ENCODE measurements at regions of chr1 and their contacts with region 1.

Region 1: DNA sequence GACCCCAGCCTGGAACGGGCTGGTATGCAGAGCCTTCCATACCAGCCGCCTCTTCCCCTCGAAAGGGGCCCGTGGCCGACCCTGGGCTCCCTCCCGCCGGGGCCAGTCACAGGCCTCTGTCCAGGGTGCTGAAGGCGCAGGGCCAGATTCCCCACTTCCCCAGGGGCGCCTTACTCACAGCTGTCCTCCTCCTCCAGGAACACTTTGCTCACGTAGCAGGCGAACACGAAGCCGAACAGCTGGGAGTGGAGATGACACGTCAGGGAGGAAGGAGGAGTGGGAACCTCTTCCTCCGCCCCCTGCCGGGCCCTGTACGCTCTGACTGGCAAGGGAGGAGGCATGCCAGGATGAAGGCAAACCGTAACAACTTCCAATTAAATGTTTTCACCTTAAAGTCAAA is 57.3 kb downstream of the NKAIN1 start:
- DNase-seq: peak; percentile 94
- ATAC-seq: peak; percentile 85
- H3K4me3 ChIP-seq: no peak overlapping the region
- H3K27ac ChIP-seq: no peak overlapping the region
- H3K4me1 ChIP-seq: peaks cover 4% of the 10 kb centered on the region
- H3K27me3 ChIP-seq: no peaks in the 10 kb centered on the region
- CTCF ChIP-seq: peak; percentile 46

Region 2: GRCh38 chr1:30877205-30877912 is 305.0 kb before region 1 on chr1:
- CTCF ChIA-PET with region 1: no interaction called
- POLR2A ChIA-PET with region 1: no interaction called
- intact Hi-C with region 1: no loop called
- DNase-seq: no peak
- ATAC-seq: no peak
- H3K4me3 ChIP-seq: no peak overlapping the region
- H3K27ac ChIP-seq: no peak overlapping the region
- H3K4me1 ChIP-seq: peaks cover 11% of the 10 kb centered on the region
- H3K27me3 ChIP-seq: no peaks in the 10 kb centered on the region
- CTCF ChIP-seq: no peak

Region 3: GRCh38 chr1:31166462-31166861 is 15.9 kb before region 1 on chr1:
- CTCF ChIA-PET with region 1: no interaction called
- POLR2A ChIA-PET with region 1: no interaction called
- intact Hi-C with region 1: loop called (anchors 1 kb)
- DNase-seq: no peak
- ATAC-seq: no peak
- H3K4me3 ChIP-seq: no peak overlapping the region
- H3K27ac ChIP-seq: no peak overlapping the region
- H3K4me1 ChIP-seq: peaks cover 10% of the 10 kb centered on the region
- H3K27me3 ChIP-seq: no peaks in the 10 kb centered on the region
- CTCF ChIP-seq: no peak

Region 4: DNA sequence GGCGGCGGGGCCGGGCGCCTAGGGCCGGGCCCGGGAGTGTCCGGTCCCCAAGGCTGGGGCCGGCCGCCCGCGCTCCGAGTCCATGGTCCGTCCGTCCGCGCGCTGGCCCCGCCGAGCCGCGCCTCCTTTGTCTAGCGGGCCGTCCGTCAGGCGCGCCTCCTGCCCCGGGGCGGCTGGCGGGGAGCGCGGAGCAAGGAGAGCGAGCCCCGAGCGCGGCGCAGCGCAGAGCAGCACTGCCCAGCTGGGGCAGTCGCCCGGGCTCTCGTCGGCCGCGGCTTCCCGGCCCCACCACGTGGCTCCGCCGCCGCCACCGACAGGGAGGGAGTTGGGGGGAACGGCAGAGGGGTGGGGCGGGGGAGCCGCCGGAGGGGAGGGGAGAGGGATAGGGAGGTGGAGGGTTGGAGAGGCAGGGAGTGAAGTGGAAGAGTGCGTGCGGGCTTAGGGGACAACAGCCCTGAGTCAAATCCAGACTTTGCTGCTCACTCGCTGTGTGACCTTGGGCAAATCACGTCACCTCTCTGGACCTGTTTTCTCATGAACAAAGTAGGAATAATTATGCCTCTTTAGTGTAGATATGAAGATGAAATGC is 57.4 kb after region 1 on chr1 and contains the start of gene NKAIN1:
- CTCF ChIA-PET with region 1: no interaction called
- POLR2A ChIA-PET with region 1: interaction called, 10 read pairs
- intact Hi-C with region 1: no loop called
- DNase-seq: peak; percentile 22
- ATAC-seq: peak; percentile 70
- H3K4me3 ChIP-seq: peak within 1 kb of the TSS; percentile 44
- H3K27ac ChIP-seq: no peak within 1 kb of the TSS
- H3K4me1 ChIP-seq: no peaks in the 10 kb centered on the region
- H3K27me3 ChIP-seq: peaks cover 32% of the 10 kb centered on the region
- CTCF ChIP-seq: no peak
- total RNA-seq, gene NKAIN1: 0.18 and 0.75 TPM in 2 replicates

Region 5: GRCh38 chr1:31264790-31265386 is 82.5 kb after region 1 on chr1:
- CTCF ChIA-PET with region 1: interaction called, 3 read pairs
- POLR2A ChIA-PET with region 1: no interaction called
- intact Hi-C with region 1: loop called (anchors 1 kb)
- DNase-seq: no peak
- ATAC-seq: no peak
- H3K4me3 ChIP-seq: no peak overlapping the region
- H3K27ac ChIP-seq: no peak overlapping the region
- H3K4me1 ChIP-seq: peaks cover 13% of the 10 kb centered on the region; the same call in 1 of the 2 replicates
- H3K27me3 ChIP-seq: no peaks in the 10 kb centered on the region
- CTCF ChIP-seq: no peak

Region 6: DNA sequence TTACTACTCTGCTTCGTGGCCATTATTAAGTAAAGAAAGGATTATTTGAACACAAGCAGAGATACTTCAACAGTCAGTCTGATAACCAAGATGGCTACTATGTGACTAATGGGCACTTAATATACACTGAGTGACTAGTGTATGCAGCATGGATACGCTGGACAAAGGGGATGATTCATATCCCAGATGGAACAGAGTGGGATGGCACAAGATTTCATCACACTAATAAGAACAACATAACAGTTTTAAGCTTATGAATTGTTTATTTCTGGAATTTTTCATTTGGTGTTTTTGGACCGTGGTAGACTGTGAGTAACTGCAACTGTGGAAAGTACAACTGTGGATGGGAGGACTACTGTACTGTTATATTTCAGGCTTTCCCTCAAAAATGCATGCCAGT is 123.9 kb after region 1 on chr1:
- CTCF ChIA-PET with region 1: no interaction called
- POLR2A ChIA-PET with region 1: no interaction called
- intact Hi-C with region 1: no loop called
- DNase-seq: peak; percentile 78
- ATAC-seq: peak; percentile 96
- H3K4me3 ChIP-seq: no peak overlapping the region
- H3K27ac ChIP-seq: peak overlapping the region; percentile 27
- H3K4me1 ChIP-seq: peaks cover 9% of the 10 kb centered on the region; the same call in 1 of the 2 replicates
- H3K27me3 ChIP-seq: no peaks in the 10 kb centered on the region
- CTCF ChIP-seq: no peak

Region 7: DNA sequence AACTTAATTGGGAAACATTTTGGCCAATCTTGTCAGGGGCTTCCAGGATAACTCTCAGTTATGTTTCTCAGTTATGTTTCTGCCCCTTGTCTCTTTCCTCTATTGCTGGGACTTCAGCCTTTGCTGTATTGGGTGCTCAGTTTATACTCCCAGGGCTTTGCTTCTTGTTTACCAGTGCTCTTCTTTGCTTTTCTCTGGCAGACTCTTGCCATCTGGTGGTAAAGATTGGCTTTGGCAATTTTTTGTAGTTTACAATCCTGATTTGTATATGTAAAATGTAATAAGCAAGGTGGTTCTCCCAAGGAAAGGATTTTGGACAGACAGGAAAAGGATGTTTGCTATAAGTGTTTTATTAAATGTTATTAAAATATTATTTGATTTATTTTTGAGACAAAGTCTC is 152.7 kb after region 1 on chr1:
- CTCF ChIA-PET with region 1: no interaction called
- POLR2A ChIA-PET with region 1: no interaction called
- intact Hi-C with region 1: loop called (anchors 1 kb)
- DNase-seq: peak; percentile 71
- ATAC-seq: peak; percentile 88
- H3K4me3 ChIP-seq: no peak overlapping the region
- H3K27ac ChIP-seq: no peak overlapping the region
- H3K4me1 ChIP-seq: no peaks in the 10 kb centered on the region
- H3K27me3 ChIP-seq: no peaks in the 10 kb centered on the region
- CTCF ChIP-seq: peak; percentile 72

Region 8: GRCh38 chr1:31422505-31423319 is 240.4 kb after region 1 on chr1:
- CTCF ChIA-PET with region 1: no interaction called
- POLR2A ChIA-PET with region 1: no interaction called
- intact Hi-C with region 1: loop called (anchors 1 kb)
- DNase-seq: peak; percentile 94
- ATAC-seq: peak; percentile 96
- H3K4me3 ChIP-seq: peak overlapping the region; percentile 14; the same call in 1 of the 2 replicates
- H3K27ac ChIP-seq: peak overlapping the region; percentile 72
- H3K4me1 ChIP-seq: peaks cover 35% of the 10 kb centered on the region
- H3K27me3 ChIP-seq: no peaks in the 10 kb centered on the region
- CTCF ChIP-seq: peak; percentile 94

Region 9: GRCh38 chr1:31548907-31549808 is 366.8 kb after region 1 on chr1:
- CTCF ChIA-PET with region 1: no interaction called
- POLR2A ChIA-PET with region 1: no interaction called
- intact Hi-C with region 1: loop called (anchors 2 kb)
- DNase-seq: peak; percentile 97
- ATAC-seq: peak; percentile 86
- H3K4me3 ChIP-seq: peak overlapping the region; percentile 55
- H3K27ac ChIP-seq: peak overlapping the region; percentile 74
- H3K4me1 ChIP-seq: peaks cover 24% of the 10 kb centered on the region
- H3K27me3 ChIP-seq: no peaks in the 10 kb centered on the region
- CTCF ChIP-seq: peak; percentile 96

Measured in PC-3 (cell line).